ENCODE measurements at regions of chr15 and their contacts with region 1.

Region 1: DNA sequence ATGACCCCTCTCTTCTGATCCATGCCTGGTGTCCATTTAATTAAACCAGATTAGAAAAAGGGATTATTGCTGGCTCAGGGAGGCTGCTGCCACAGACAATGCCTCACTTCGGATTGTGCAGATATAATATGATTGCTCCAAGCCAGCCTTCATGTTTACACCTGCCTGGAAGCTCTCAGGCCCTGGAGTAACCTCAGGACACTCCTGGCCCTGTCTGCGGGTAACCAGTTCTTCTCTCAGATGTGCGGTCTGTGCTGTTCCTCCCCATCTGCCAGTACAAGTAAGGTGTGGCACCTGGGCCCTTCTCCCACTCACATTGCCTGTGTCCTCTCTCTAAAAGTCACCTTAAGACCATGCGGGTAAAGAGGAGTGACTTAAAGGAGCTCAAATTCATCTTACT is 8.8 kb upstream of the GOLGA8J start:
- DNase-seq: no peak
- H3K4me3 ChIP-seq: no peak overlapping the region
- H3K27ac ChIP-seq: peak overlapping the region in 13 of 59 donors; percentile 5 to 84 (median 47)
- H3K27me3 ChIP-seq: no peaks in the 10 kb centered on the region
- CTCF ChIP-seq: no peak

Region 2: DNA sequence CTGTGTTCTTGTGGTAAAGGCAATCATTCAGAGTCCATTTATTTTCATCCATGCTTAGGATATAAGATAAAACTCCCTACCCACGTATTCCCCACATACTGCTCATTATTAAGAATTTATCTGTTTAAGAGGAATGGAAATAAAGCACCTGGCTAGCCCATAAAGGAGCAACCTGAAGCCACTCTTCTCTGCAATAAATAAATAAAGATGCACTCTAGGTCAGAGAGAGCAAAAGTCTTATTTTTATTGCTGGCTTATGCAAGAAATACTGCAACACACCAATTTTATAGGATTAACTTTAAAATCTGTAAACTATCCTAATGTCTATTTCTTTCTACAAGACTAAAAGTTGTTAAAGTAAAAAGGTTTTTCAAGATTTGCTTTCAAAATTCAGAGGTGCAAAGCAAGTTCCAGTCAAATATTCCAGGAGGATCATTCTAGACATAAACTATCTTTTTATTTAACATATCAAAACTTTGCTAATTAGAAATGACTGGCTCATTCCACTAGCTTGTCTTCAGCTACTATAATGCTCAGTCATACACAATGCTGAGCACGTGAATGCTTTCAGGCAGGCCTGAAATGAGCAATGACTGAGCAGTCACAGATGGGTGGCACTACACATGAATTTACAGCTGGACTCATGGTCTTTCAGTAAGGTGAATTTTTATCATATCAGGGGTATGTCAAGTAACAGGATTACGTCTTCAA is 258.8 kb before region 1 on chr15:
- intact Hi-C with region 1: no loop called
- DNase-seq: no peak
- H3K4me3 ChIP-seq: no peak overlapping the region
- H3K27ac ChIP-seq: peak overlapping the region in 19 of 59 donors; percentile 1 to 58 (median 17)
- H3K27me3 ChIP-seq: no peaks in the 10 kb centered on the region
- CTCF ChIP-seq: peak in 1 of 56 donors; percentile 26

Region 3: GRCh38 chr15:29942143-29942542 is 131.8 kb before region 1 on chr15:
- intact Hi-C with region 1: loop called in 1 of 2 experiments (anchors 5 kb)
- DNase-seq: peak in 1 of 10 donors; percentile 60
- H3K4me3 ChIP-seq: no peak overlapping the region
- H3K27ac ChIP-seq: peak overlapping the region; percentile 58 to 95 (median 89)
- H3K27me3 ChIP-seq: no peaks in the 10 kb centered on the region
- CTCF ChIP-seq: peak; percentile 32 to 84 (median 64)